HCT116 (cell line): ENCODE measurements at regions of chr16 and their contacts with region 1.

Region 1: DNA sequence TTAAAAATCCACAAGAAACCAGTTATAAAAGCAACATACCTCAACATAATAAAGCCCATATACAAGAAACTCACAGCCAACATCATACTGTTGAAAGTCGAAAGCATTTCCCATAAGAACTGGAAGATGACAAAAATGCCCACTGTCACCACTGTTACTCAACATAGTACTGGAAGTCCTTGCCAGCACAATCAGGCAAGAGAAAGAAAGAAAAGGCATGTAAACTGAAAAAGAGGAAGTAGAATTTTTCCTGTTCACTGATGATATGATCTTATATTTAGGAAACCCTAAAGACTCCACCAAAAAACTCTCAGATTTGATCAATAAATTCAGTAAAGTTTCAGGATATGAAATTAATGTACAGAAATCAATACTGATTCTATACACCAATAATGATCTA is 45.1 kb downstream of the AHSP start:
- DNase-seq: no peak
- ATAC-seq: no peak
- H3K4me3 ChIP-seq: no peak overlapping the region
- H3K27ac ChIP-seq: no peak overlapping the region
- H3K4me1 ChIP-seq: no peaks in the 10 kb centered on the region
- H3K27me3 ChIP-seq: no peaks in the 10 kb centered on the region
- CTCF ChIP-seq: no peak
- POLR2A ChIP-seq: no peak
- RAD21 ChIP-seq: no peak

Region 2: DNA sequence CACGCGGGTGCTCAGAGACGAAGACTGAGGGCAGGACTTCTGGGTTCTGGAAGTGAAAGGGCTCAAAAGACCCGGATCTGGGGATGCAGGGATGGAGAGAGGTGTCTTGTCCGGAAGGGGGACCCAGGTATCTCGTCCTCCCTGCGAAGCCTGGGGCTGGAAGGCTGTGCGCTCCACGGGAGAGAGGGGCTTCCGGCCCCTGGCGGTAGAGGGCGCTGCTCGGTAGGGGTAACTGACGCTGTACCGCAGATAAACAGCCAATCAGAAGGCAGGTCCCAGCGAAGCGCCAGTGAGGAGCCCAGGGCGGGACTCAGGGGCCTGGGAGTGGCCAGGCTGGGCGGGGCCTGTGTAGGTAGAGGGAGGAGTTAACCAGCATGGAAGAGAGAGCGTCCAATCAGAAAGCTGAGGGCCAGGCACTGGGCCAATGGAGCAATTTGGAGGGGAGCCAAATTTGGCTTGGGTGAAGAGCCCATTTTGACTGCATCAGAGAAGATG is 100.1 kb before region 1 on chr16:
- CTCF ChIA-PET with region 1: no interaction called
- POLR2A ChIA-PET with region 1: no interaction called
- RAD21 ChIA-PET with region 1: no interaction called
- intact Hi-C with region 1: no loop called
- DNase-seq: peak; percentile 90
- ATAC-seq: peak; percentile 89
- H3K4me3 ChIP-seq: peak overlapping the region; percentile 66 to 72
- H3K27ac ChIP-seq: peak overlapping the region; percentile 78
- H3K4me1 ChIP-seq: peaks cover 11 to 34% of the 10 kb centered on the region in 2 experiments
- H3K27me3 ChIP-seq: no peaks in the 10 kb centered on the region
- CTCF ChIP-seq: peak; percentile 80 to 98 (median 86)
- POLR2A ChIP-seq: no peak
- RAD21 ChIP-seq: peak; percentile 67

Region 3: GRCh38 chr16:31487720-31488467 is 84.9 kb before region 1 on chr16:
- CTCF ChIA-PET with region 1: no interaction called
- POLR2A ChIA-PET with region 1: no interaction called
- RAD21 ChIA-PET with region 1: no interaction called
- intact Hi-C with region 1: no loop called
- DNase-seq: no peak
- ATAC-seq: peak; percentile 95
- H3K4me3 ChIP-seq: peak overlapping the region; percentile 54 to 59
- H3K27ac ChIP-seq: peak overlapping the region; percentile 28; the same call in 1 of the 2 replicates
- H3K4me1 ChIP-seq: peaks cover 7 to 20% of the 10 kb centered on the region in 2 experiments; a peak in 3 of 4 replicates
- H3K27me3 ChIP-seq: no peaks in the 10 kb centered on the region
- CTCF ChIP-seq: no peak
- POLR2A ChIP-seq: no peak
- RAD21 ChIP-seq: no peak

Region 4: GRCh38 chr16:31513126-31513525 is 59.7 kb before region 1 on chr16:
- CTCF ChIA-PET with region 1: no interaction called
- POLR2A ChIA-PET with region 1: no interaction called
- RAD21 ChIA-PET with region 1: no interaction called
- intact Hi-C with region 1: no loop called
- DNase-seq: no peak
- ATAC-seq: no peak
- H3K4me3 ChIP-seq: no peak overlapping the region
- H3K27ac ChIP-seq: no peak overlapping the region
- H3K4me1 ChIP-seq: peaks cover 6 to 10% of the 10 kb centered on the region in 2 experiments; a peak in 3 of 4 replicates
- H3K27me3 ChIP-seq: no peaks in the 10 kb centered on the region
- CTCF ChIP-seq: no peak
- POLR2A ChIP-seq: no peak
- RAD21 ChIP-seq: no peak

Region 5: GRCh38 chr16:31636433-31636832 is 63.6 kb after region 1 on chr16:
- CTCF ChIA-PET with region 1: no interaction called
- POLR2A ChIA-PET with region 1: no interaction called
- RAD21 ChIA-PET with region 1: no interaction called
- intact Hi-C with region 1: no loop called
- DNase-seq: no peak
- ATAC-seq: no peak
- H3K4me3 ChIP-seq: no peak overlapping the region
- H3K27ac ChIP-seq: no peak overlapping the region
- H3K4me1 ChIP-seq: no peaks in the 10 kb centered on the region
- H3K27me3 ChIP-seq: no peaks in the 10 kb centered on the region
- CTCF ChIP-seq: no peak
- POLR2A ChIP-seq: no peak
- RAD21 ChIP-seq: no peak

Region 6: DNA sequence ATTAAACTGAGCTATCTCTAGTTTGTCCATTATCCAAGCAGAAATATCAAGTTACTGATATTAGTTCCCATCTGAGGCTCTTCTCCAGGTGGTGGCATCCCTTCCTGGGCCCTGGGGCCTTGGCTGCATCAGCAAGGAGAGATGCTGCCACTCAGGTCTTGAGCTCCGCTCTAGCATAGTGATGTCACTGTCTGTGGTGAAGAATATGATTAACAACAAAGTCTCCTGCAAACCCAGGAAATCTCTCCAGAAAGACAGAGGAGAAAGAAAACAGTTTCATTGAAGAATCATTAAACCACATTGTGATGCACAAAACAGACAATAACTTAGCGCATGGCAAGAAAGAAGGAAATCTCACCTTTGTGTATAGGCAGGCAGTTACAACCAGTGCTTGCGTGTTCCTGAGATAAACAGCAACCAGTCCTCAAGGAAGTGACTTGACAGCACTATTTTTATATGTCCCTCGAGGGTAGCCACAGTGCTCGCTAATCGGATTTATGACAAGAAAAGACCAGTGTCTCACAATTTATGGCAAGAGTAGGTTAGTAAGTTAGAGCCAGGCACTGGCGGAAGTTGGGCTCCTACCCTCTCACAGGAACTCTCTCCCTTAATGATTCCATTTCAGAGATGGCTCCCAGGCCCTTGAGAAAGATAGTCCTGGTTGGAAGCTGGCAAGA is 106.0 kb after region 1 on chr16:
- CTCF ChIA-PET with region 1: no interaction called
- POLR2A ChIA-PET with region 1: no interaction called
- RAD21 ChIA-PET with region 1: no interaction called
- intact Hi-C with region 1: loop called (anchors 10 kb)
- DNase-seq: no peak
- ATAC-seq: no peak
- H3K4me3 ChIP-seq: no peak overlapping the region
- H3K27ac ChIP-seq: no peak overlapping the region
- H3K4me1 ChIP-seq: no peaks in the 10 kb centered on the region
- H3K27me3 ChIP-seq: no peaks in the 10 kb centered on the region
- CTCF ChIP-seq: no peak
- POLR2A ChIP-seq: no peak
- RAD21 ChIP-seq: no peak